ENCODE measurements at regions of chr15 and their contacts with region 1.

Region 1: DNA sequence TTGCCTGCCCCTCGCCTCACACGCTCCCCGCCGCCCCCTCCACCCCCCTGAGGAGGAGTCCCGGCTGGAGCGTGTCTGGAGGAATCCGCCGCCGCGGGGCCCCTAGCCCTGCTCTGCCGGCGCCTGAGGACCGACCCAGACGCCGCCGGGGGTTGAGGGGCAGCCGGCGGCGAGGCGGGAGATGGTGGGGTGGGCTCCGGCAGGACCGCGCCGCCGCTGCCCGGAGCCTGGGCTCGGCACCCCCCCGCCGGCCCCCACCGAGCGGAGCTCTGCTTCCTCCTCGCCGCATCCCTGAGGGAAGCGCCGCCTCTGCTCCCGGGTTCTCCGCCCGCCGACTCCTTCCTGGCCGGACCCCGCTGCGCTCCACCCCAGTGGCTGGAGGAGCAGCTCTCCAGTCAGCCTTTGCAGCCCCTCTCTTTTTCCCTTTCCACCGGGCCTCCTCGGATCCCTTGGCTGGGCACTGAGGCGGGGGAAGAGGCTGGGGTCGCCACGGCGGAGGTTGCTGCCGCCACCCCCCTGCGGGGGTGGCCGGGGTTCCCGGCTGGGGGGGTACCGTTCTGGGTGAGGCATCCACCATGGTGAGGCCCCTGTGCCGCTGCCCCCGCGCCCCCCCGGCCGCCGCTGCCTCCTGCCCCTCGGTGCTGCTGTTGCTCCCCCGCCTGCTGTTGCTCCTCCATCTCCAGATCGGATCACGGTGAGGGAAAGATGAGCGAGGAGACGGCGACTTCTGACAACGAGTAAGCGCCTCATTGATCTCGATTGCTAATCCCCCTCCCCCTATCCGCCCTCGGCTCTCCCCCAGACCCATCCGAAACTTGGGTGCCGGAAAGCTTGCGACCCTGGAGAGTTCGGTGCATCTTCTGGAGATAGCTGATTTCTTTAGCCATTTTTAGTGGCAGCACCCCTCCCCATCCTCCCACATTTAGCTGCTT is at the start of gene SPRED1:
- DNase-seq: peak; percentile 86
- total RNA-seq, gene SPRED1: 12.7 TPM

Region 2: DNA sequence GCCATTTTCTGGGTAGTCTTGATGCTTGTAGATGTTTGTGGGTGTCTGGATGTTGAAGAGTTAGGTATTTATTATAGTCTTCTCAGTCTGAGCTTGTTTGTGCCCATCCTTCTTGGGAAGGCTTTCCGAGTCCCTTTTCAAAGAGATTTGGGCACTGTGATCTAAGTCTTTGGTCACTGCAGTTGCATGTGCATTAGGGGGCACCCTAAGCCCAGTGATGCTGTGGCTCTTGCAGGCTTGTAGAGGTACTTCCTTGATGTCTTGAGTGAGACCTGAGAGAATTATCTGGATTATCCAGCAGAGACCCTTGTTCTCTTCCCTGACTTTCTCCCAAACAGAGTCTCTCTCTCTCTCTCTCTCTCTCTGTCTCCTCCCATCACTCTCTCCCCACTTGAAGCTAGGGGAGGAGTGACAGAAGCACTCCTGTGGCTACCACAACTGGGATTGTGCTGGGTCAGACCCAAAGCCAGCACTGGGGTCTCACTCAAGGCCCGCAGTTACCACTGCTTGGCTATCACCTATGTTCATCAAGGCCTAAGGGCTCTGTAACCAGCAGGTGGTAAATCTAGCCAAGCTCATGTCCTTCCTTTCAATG is 249.8 kb before region 1 on chr15:
- intact Hi-C with region 1: loop called (anchors 10 kb)
- DNase-seq: no peak

Region 3: DNA sequence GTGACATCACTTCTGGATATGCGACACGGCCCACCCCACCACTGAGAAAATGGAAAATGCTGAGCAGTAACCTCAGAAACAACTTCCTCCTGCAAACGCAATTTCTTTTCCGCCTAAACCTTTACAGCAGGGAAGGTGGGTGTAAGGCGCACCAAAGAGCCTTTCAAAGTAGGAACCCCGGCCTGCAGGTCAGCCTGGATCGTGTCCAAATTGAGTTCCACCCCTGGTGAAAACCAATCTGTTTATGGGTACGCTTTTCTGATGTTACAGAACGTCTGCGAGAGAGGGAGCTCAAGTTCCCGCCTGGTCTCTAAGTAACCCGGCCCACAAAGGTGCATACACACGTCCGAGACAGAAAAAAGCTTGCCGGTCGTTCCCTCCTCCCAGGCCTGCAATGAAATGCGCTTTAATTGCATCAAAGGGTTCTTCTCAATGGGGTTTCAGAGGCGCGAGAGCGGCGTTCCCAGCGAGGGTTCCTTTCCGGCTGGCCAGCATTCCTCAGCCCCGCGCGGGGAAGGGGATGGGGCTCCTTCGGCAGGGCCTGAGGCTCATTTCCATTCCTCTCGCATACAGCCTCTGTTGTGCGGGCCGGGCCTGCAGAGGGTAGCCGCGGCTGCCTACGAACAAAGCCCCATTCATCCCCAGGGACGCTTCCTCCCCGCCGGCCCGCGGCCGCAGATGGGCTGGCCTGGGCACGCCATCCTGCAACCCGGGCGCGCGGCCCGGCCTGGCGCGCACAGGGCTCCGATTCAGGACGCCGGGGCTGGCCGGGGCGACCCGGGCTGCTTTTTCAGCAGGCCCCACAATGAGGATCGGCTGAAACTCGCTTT is 180.2 kb before region 1 on chr15:
- intact Hi-C with region 1: loop called (anchors 2 kb)
- DNase-seq: peak; percentile 81

Region 4: DNA sequence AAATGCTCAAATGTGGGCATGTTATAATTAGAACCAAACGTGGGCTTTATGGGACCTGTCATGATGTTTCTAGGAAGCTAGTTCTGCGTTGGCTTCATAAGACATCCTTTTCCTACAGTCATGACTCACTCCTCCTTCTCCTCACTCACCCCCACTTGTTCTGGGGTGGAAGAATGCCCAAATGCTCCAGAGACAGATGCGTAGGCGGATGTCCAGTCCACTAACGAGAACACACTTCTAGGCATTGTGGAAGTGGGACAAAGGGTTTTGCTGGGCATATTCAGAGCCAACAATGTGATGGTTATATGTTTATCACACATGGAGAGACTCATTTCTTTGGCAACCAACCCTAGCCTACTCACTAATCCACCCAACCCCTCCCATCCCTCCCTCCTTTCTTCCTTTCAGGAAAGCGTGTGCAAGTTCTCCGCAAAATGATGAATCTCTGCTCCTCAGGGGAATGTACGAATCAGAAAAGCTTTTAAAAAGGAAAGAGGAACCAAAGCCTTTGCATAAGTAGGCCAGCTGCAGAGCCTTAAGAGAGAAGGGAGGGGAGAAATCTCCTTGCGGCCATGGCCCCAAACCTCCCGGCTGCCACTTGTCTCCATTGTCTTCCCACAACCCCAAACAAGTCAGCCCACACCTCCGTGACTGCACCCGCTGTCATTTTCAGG is 123.1 kb before region 1 on chr15:
- intact Hi-C with region 1: loop called (anchors 2 kb)
- DNase-seq: no peak

Region 5: DNA sequence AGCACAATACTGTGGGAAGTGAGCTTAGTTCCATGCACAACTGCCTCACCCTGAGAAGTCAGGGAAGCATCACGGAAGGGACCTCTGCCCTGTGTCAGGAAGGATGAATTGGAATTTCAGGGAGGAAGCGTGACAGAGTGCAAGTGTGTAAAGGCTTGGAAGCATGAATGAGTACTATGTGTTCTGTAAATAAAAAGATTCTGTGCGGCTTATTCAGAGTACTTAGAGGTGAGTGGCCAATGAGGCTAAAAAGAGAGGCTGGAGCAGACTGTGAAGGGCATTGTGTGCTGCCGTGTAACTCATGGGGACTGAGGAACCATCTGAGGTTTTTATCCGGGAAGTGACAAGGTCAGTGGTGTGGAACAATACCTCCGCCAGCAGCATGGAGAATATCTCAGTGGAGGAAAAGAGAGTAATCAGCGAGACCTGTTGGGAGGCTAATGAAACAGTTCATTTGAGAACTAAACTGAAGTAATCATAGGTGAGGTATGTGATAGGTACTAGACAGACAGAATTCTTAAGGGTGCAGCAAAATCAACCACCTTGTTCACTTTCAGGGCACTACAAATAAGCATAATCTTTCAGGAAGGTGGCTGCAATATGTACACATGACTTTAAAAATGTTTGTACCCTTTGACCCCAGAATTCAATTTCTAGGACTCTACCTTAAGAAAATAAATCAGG is 65.0 kb before region 1 on chr15:
- intact Hi-C with region 1: no loop called
- DNase-seq: no peak

Region 6: GRCh38 chr15:38308797-38309196 is 56.0 kb after region 1 on chr15:
- intact Hi-C with region 1: loop called (anchors 5 kb)
- DNase-seq: no peak

Region 7: DNA sequence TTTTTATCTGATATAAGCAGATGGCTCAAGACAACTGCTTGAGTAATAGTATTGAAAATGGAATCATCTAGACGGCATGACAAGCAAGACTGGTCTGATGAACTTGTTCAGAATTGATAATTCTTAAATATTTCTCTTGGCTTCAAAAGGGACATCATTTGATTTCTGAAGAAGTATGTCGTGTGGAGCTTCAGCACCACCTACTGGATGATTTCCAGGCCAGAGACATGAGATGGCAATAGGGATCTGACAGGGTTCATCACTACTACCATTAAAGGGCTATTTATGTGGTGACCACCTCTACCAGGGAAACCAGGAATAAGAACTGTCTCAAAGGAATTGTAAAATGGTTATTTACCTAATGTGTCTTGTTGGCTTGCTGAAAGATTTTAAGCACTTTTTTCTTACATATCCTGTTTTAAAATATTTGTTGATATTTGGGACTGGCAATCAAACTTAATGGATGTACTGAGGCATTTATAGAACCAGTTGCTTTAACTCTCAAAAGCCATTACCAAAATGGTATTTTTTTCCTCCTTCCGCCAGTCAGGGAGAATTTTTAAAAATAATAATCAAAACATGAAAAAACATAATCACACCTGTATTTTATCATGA is 101.7 kb after region 1 on chr15:
- intact Hi-C with region 1: loop called (anchors 5 kb)
- DNase-seq: no peak

Region 8: GRCh38 chr15:38378161-38378560 is 125.4 kb after region 1 on chr15:
- intact Hi-C with region 1: loop called (anchors 5 kb)
- DNase-seq: peak; percentile 77

Measured in cardiac septum (tissue), 1 donor.